ENCODE measurements at regions of chr10 and their contacts with region 1.

Region 1: GRCh38 chr10:119445311-119445934 is 97.1 kb downstream of the RGS10 start:
- DNase-seq: peak; percentile 74
- ATAC-seq: peak; percentile 70
- H3K4me3 Mint-ChIP-seq: no peak overlapping the region
- H3K27ac Mint-ChIP-seq: peak overlapping the region; percentile 61
- H3K4me1 Mint-ChIP-seq: peaks cover 31% of the 10 kb centered on the region
- H3K27me3 Mint-ChIP-seq: no peaks in the 10 kb centered on the region
- CTCF ChIP-seq: peak; percentile 57

Region 2: DNA sequence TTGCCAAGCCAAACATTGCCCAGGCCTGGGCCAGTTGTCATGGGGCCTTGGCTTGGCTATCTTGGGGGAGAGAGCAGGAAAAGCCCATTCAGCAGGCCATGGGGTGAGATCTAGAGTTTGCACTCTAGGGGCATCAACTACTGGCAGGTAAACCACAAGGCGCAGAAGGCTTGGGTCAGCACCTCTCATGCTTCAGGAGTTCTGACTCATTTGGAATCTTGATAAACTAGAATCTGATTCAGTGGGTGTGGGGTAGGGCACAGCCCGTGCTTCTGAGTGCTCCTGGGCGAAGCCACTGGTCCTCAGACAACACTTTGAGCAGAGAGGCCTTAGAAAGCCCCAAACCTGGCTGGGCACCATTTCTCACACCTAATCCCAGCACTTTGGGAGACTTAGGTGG is 16.0 kb after region 1 on chr10:
- CTCF ChIA-PET with region 1: interaction called, 4 read pairs
- POLR2A ChIA-PET with region 1: interaction called, 13 read pairs
- intact Hi-C with region 1: loop called (anchors 1 kb)
- DNase-seq: no peak
- ATAC-seq: peak; percentile 92
- H3K4me3 Mint-ChIP-seq: peak overlapping the region; percentile 33
- H3K27ac Mint-ChIP-seq: peak overlapping the region; percentile 78
- H3K4me1 Mint-ChIP-seq: peaks cover 39% of the 10 kb centered on the region
- H3K27me3 Mint-ChIP-seq: peaks cover 7% of the 10 kb centered on the region
- CTCF ChIP-seq: no peak

Region 3: GRCh38 chr10:119555178-119555784 is 109.9 kb after region 1 on chr10:
- CTCF ChIA-PET with region 1: no interaction called
- POLR2A ChIA-PET with region 1: no interaction called
- intact Hi-C with region 1: no loop called
- DNase-seq: no peak
- ATAC-seq: no peak
- H3K4me3 Mint-ChIP-seq: no peak overlapping the region
- H3K27ac Mint-ChIP-seq: no peak overlapping the region
- H3K4me1 Mint-ChIP-seq: no peaks in the 10 kb centered on the region
- H3K27me3 Mint-ChIP-seq: no peaks in the 10 kb centered on the region
- CTCF ChIP-seq: no peak

Measured in activated B cell treated with CpG ODN at 0.5 μM for 24 hours (primary cell).